Astrocyte of the cerebellum (primary cell): ENCODE measurements at regions of chr1 and their contacts with region 1.

Region 1: GRCh38 chr1:72892461-72892860 is 610.1 kb upstream of the NEGR1 start:
- DNase-seq: no peak
- H3K4me3 ChIP-seq: no peak overlapping the region
- CTCF ChIP-seq: no peak

Region 2: DNA sequence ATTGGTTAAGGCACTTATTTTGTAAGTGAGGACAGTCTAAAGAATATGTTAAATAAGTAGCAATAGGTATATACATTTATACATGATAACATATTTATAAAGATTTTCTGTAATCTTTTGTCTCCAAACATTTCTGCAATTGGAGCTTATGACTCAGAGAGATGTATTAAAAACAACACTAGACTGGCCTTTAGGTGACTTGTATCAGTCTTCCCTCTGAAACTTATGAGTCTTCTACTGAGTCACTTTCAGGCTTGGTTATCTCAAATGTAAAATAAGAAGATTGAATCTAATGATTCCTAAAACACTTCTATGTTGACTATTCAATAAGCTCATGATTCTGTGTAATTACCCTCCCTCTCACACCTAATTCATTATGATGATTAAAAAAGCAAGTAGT is 62.5 kb after region 1 on chr1:
- in situ Hi-C with region 1: loop called (anchors 5 kb)
- DNase-seq: no peak
- H3K4me3 ChIP-seq: no peak overlapping the region
- CTCF ChIP-seq: no peak